ENCODE measurements at regions of chr9 and their contacts with region 1.

Region 1: DNA sequence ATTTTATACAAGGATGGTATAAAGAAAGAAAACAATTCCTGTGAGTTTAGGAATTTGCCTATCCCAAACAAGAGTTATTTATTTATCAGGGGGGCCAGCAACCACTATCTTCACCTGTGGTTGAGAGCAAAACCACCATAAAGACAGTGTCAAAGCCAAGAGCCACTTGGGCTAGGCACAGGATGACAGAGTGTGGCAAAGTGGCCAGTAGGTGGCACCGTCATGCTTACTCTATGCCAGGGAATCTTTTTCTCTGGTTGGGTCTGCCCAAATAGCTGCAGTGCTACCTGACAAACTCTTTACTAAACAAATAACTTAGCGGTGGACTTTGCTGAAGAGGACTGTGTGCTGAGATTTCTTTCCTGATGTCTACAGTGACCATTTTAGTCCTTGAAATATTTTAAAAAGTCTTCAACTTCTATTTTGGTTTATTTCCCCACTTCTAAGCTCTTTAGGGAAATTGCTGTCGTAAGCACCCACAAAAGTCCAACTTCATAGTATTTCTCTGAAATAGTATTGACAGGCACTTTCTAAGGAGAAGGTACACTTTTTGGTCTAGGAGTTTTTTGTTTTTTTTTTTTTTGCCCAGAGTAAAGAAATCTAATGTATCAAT is 285.0 kb downstream of the RFX3 start:
- DNase-seq: peak; percentile 85
- H3K4me3 Mint-ChIP-seq: no peak overlapping the region
- H3K27ac Mint-ChIP-seq: no peak overlapping the region
- H3K4me1 Mint-ChIP-seq: peaks cover 7% of the 10 kb centered on the region
- H3K27me3 Mint-ChIP-seq: no peaks in the 10 kb centered on the region

Region 2: DNA sequence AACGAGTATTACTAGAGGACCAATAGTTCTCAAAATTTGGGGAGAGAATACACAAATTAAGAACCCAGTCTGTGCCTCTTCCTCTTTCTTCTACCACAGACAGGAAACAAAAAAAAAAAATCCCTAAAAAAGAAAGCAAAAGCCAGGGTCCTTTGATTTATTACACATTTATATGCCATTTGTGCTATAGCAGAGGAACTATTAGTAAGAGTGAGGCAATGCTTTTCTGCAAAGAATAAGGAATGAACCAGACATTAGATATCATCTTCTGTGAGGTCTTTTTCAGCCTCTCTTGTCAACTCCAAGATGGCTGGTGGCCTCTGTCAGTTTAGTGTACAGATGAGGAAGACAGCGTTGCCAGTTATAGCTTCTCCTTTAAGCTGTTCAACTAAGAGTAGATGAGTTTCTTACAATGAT is 157.5 kb after region 1 on chr9:
- CTCF ChIA-PET with region 1: interaction called, 12 read pairs
- intact Hi-C with region 1: no loop called
- DNase-seq: peak; percentile 31
- H3K4me3 Mint-ChIP-seq: peak overlapping the region; percentile 53
- H3K27ac Mint-ChIP-seq: peak overlapping the region; percentile 86
- H3K4me1 Mint-ChIP-seq: peaks cover 37% of the 10 kb centered on the region
- H3K27me3 Mint-ChIP-seq: no peaks in the 10 kb centered on the region

Region 3: DNA sequence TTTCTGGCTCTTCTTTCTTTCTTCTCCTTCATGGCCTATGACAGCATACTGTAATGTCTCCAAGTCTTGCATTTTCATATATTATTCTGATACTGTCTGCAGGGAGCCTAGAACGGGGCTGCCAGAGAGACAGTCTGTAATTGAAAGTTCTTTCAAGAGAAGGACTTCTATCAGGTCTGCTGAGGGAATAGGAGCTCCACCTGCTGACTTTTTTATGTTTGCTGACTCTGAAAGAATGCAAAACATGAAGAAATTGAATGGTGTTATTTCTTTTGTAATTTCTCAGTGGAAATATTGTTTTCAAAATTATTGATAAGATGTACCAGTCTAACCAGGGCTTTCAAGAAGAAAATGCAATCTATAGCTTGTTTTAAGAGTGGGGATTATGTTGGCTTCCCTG is 406.9 kb after region 1 on chr9:
- CTCF ChIA-PET with region 1: no interaction called
- intact Hi-C with region 1: loop called (anchors 5 kb)
- DNase-seq: no peak
- H3K4me3 Mint-ChIP-seq: no peak overlapping the region
- H3K27ac Mint-ChIP-seq: no peak overlapping the region
- H3K4me1 Mint-ChIP-seq: no peaks in the 10 kb centered on the region
- H3K27me3 Mint-ChIP-seq: no peaks in the 10 kb centered on the region

Region 4: GRCh38 chr9:4228606-4229005 is 987.8 kb after region 1 on chr9:
- CTCF ChIA-PET with region 1: no interaction called
- intact Hi-C with region 1: loop called (anchors 1 kb)
- DNase-seq: no peak
- H3K4me3 Mint-ChIP-seq: no peak overlapping the region
- H3K27ac Mint-ChIP-seq: no peak overlapping the region
- H3K4me1 Mint-ChIP-seq: peaks cover 16% of the 10 kb centered on the region
- H3K27me3 Mint-ChIP-seq: no peaks in the 10 kb centered on the region